A549 (cell line): ENCODE measurements at regions of chr21 and their contacts with region 1.

Region 1: DNA sequence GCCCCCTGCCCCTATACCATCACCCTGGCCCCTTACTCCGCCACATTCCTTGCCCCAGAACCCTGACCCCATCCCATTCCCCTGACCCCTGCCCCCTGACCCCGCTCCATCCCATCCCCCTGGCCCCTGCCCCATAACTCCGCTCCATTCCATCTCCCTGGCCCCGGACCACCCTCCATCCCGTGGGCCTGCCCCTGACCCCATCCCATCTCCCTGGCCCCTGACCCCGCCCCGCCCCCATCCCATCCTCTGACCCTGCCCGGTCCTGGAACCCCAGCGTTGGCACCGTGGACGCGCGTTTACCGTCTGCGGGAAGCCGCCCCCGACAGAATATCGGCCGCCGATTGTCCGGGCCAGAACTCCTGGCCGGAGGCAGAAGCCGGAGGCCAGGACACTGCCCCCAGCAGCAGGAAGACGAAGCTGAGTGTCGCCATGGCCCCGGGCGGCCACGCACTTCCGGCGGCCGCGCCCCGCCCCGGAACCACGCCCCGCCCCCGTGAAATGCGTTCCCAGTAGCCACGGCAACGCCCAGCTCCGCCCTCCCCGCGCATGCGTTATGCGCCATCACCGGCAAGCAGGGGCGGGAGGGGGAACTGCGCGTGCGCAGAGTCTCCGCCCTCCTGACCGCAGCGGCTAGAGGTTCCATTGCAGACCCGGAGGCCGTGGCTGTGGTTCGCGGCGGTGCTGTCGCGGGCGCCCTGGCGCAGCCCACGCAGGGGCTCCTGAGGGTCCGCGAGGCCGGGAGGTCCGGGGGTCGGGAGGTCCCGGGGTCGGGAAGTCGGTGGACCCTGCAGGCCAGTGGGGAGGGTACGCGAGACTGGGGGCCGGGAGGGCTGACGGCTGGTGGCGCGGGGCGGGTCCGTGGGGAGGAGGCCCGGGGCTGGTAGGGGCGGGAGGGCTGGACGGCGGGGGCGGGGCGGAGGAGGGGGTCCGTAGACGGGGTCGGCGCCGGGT is at the start of gene POFUT2:
- DNase-seq: peak; percentile 83 to 90
- ATAC-seq: peak; percentile 77 to 80
- H3K4me3 ChIP-seq: peak within 1 kb of the TSS; percentile 86
- H3K27ac ChIP-seq: peak within 1 kb of the TSS; percentile 86 to 94
- H3K4me1 ChIP-seq: peaks cover 14% of the 10 kb centered on the region
- CTCF ChIP-seq: no peak
- EP300 ChIP-seq: no peak
- POLR2A ChIP-seq: peak; percentile 66
- RAD21 ChIP-seq: no peak
- polyA plus RNA-seq, gene POFUT2: 10.5 and 10.7 TPM in 2 replicates

Region 2: DNA sequence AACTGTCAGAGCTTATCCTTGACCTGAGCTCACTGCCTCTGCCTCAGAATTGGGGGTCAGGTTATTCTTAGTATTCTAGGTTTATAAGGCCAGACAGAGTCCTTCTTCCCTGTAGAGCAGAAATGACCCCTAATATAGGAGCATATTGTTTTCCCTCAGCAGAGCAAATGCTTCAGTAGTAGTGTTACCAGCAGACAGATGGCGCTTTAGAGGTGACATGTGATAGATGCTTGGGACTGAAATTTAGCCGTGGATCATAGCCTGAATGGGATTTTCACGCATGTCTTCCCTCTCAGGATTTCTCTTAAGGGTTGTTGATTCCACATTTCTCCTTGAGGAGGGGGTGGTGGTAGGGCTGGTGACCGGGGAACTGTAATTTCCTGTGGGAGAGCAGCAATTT is 188.8 kb before region 1 on chr21:
- CTCF ChIA-PET with region 1: no interaction called
- POLR2A ChIA-PET with region 1: no interaction called
- DNase-seq: peak in 1 of 2 experiments; percentile 14
- ATAC-seq: peak; percentile 68 to 69; a peak in 4 of 6 replicates
- H3K4me3 ChIP-seq: no peak overlapping the region
- H3K27ac ChIP-seq: no peak overlapping the region
- H3K4me1 ChIP-seq: peaks cover 11% of the 10 kb centered on the region; the same call in 2 of the 3 replicates
- CTCF ChIP-seq: peak; percentile 33; the same call in 2 of the 3 replicates
- EP300 ChIP-seq: no peak
- POLR2A ChIP-seq: no peak
- RAD21 ChIP-seq: peak in 1 of 2 experiments; percentile 17; a peak in 1 of 5 replicates

Region 3: DNA sequence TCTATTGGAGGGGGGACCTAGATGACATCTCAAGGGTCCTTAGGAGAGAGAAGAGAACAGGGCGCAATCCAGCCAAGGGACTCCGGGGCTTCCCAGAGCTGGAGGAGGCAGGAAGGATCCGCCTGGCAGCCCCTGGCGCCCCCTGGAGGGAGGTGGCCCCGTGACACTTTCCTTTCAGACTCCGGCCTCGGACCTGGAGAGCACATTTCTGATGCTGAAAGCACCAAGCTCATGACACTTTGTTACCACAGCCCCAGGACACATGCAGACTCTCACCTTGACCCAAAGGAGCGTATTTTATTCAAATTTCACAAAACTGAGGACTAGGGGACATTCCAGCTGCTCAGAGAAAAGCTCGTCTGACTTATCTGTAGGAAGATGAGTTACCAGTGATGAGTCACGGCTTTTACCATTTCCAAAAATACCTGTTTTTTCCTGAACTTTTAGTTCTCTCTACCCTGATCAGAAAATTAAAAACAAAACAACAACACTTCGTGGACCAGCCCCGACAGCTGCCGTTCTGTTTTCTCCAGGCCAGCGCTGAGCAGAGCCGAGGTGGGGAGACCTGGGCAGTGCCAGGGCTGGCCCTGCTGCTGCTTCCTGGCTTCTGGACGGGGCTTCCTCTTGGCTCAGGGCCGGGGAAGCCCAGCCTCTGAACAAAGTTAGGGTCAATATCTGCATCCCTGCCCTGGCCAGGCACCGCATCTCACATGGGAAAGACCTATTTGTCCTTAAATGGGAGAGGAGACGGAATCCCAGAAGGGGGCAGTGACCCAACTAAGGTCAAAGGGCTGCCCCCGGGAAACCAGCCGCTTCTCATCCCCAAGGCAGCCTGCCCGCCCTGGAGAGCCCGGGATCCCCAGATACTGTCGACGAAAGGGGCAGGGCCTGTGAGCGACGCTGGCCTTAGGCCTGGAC is 21.6 kb after region 1 on chr21:
- CTCF ChIA-PET with region 1: interaction called, 10 read pairs
- POLR2A ChIA-PET with region 1: interaction called, 5 read pairs
- DNase-seq: peak; percentile 42 to 55
- ATAC-seq: peak; percentile 89 to 94
- H3K4me3 ChIP-seq: no peak overlapping the region
- H3K27ac ChIP-seq: peak overlapping the region; percentile 69 to 85
- H3K4me1 ChIP-seq: peaks cover 19% of the 10 kb centered on the region
- CTCF ChIP-seq: peak; percentile 57; the same call in 2 of the 3 replicates
- EP300 ChIP-seq: no peak
- POLR2A ChIP-seq: no peak
- RAD21 ChIP-seq: peak; percentile 28 to 57; a peak in 3 of 5 replicates

Region 4: DNA sequence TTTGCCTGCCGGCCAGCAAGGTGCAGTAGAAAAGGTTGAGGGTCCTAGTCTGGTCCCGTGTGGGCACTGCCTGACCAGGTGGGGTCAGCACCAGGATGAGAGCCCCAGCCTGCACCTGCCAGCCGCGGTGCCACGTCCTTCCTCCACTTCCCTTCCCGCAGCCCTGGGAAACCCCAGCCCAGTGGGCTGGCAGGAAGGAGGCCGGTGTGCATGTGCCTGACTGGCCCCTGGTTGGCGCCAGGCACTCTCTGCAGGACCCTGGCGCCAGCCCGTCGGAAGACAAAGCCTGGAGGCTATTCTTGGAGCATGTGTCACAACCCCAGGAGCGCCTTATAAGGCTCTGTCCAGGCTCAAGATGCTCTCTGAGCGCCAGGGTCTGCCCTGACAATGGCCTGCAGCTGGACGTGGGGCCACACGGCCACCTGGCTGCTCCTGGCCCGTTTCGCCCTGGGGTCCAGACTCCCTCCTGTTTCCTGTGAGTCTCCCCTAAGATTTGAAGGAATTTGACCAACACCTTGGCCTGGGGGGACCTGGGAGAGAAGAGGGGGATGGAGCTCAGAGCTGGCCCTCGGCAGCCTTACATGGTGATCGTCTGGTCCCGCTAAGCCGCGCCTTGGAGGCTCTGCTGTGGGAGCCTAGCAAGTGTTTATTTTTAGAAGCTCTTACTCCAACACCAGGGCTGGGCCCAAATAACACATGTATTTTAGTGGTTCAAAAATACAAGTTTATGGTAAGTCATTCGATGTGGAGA is 31.9 kb after region 1 on chr21:
- CTCF ChIA-PET with region 1: interaction called, 20 read pairs
- POLR2A ChIA-PET with region 1: no interaction called
- DNase-seq: peak in 1 of 2 experiments; percentile 68
- ATAC-seq: peak; percentile 30 to 71
- H3K4me3 ChIP-seq: no peak overlapping the region
- H3K27ac ChIP-seq: peak overlapping the region; percentile 97 to 100
- H3K4me1 ChIP-seq: peaks cover 77% of the 10 kb centered on the region
- CTCF ChIP-seq: no peak
- EP300 ChIP-seq: no peak
- POLR2A ChIP-seq: no peak
- RAD21 ChIP-seq: no peak

Region 5: GRCh38 chr21:45427331-45428271 is 139.9 kb after region 1 on chr21:
- CTCF ChIA-PET with region 1: interaction called, 13 read pairs
- POLR2A ChIA-PET with region 1: interaction called, 4 read pairs
- DNase-seq: peak; percentile 89 to 92
- ATAC-seq: peak; percentile 94 to 95
- H3K4me3 ChIP-seq: no peak overlapping the region
- H3K27ac ChIP-seq: peak overlapping the region; percentile 97 to 98
- H3K4me1 ChIP-seq: peaks cover 53% of the 10 kb centered on the region
- CTCF ChIP-seq: no peak
- EP300 ChIP-seq: peak in 1 of 2 experiments; percentile 19; a peak in 1 of 5 replicates
- POLR2A ChIP-seq: no peak
- RAD21 ChIP-seq: no peak

Region 6: DNA sequence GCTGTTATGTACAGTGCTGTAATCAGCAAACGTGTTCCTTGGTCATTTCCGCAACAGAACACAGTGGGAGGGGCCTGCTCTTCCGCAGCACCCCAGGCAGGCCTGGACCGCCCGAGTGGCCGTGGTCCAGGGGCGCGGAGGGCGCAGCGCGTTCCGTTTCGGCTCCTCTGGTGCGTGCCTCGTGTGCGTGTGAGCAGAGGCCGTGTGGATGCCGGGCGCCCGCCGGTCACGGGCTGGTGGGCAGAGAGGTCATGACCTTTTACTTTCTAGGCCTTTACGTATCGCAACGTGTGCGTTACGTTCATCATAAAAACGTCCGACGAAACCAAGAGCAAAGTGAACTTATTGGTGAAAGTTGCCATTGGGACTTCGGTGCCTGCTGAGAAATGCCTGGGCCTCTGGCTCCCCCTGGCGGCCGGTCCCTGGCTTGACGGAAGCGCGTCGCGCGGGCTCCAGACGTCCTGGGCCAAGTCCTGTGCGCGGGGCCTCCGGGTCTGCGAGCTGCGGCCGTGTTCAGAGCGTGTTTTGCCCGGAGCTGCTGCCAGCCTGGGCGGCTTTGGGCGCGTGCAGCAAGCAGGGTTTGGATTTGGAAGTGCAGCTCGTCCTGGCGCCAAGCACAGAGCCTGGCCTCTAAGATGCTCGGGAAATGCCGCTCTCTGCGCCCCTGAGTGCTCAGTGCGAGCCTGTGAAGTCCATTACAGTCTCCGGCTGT is 151.6 kb after region 1 on chr21:
- CTCF ChIA-PET with region 1: interaction called, 75 read pairs
- POLR2A ChIA-PET with region 1: no interaction called
- DNase-seq: peak; percentile 58 to 78
- ATAC-seq: peak; percentile 69 to 91
- H3K4me3 ChIP-seq: no peak overlapping the region
- H3K27ac ChIP-seq: peak overlapping the region; percentile 64 to 84
- H3K4me1 ChIP-seq: peaks cover 16% of the 10 kb centered on the region
- CTCF ChIP-seq: peak; percentile 78
- EP300 ChIP-seq: no peak
- POLR2A ChIP-seq: no peak
- RAD21 ChIP-seq: peak; percentile 93 to 95